H1 (cell line): ENCODE measurements at regions of chr4 and their contacts with region 1.

Region 1: DNA sequence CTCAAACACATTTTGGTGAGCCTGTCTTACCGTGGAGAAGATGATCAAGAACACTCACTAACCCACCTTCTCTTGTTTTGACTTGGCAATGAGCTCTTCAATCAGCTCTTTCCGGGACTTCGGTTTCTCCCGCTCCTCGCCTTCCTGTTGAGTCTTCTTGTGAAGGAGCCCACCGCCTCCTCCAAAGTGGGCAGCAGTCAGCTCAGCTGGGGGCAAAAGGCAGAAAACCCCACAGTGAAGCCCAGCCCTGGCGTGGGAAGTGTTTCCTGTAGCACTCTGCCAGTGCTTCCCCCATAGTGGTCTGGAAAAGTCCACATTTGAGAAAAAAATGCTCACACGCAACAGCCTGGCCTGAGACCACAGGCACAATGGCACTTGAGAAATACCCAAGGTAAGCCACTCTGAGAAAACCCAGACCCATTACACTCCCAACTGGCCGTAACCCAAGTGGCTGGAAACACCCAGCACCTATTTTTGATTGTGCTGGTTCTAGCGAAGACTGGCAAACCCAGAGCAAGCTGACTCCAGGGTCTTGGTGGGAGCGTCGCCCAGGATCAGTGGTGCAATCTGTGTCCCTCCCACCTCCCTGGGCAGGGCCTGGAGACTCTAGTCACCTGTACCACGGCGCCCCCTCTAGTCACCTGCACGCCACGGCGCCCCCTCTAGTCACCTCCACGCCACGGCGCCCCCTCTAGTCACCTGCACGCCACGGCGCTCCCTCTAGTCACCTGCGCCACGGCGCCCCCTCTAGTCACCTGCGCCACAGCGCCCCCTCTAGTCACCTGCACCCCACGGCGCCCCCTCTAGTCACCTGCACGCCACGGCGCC is 8.6 kb downstream of the NOP14 start:
- DNase-seq: peak in 1 of 2 experiments; percentile 78
- H3K4me3 ChIP-seq: no peak overlapping the region
- H3K27ac ChIP-seq: no peak overlapping the region
- H3K4me1 ChIP-seq: no peaks in the 10 kb centered on the region
- H3K27me3 ChIP-seq: no peaks in the 10 kb centered on the region
- CTCF ChIP-seq: peak in 2 of 3 experiments; percentile 78 to 96; a peak in 3 of 4 replicates
- EP300 ChIP-seq: no peak
- POLR2A ChIP-seq: no peak
- RAD21 ChIP-seq: peak; percentile 44 to 46; a peak in 3 of 4 replicates

Region 2: GRCh38 chr4:2910409-2910808 is 44.2 kb before region 1 on chr4:
- CTCF ChIA-PET with region 1: interaction called, 23 read pairs
- POLR2A ChIA-PET with region 1: no interaction called
- DNase-seq: no peak
- H3K4me3 ChIP-seq: no peak overlapping the region
- H3K27ac ChIP-seq: no peak overlapping the region
- H3K4me1 ChIP-seq: no peaks in the 10 kb centered on the region
- H3K27me3 ChIP-seq: no peaks in the 10 kb centered on the region
- CTCF ChIP-seq: peak; percentile 50 to 62 (median 57)
- EP300 ChIP-seq: no peak
- POLR2A ChIP-seq: no peak
- RAD21 ChIP-seq: peak; percentile 27 to 59; a peak in 3 of 4 replicates

Region 3: DNA sequence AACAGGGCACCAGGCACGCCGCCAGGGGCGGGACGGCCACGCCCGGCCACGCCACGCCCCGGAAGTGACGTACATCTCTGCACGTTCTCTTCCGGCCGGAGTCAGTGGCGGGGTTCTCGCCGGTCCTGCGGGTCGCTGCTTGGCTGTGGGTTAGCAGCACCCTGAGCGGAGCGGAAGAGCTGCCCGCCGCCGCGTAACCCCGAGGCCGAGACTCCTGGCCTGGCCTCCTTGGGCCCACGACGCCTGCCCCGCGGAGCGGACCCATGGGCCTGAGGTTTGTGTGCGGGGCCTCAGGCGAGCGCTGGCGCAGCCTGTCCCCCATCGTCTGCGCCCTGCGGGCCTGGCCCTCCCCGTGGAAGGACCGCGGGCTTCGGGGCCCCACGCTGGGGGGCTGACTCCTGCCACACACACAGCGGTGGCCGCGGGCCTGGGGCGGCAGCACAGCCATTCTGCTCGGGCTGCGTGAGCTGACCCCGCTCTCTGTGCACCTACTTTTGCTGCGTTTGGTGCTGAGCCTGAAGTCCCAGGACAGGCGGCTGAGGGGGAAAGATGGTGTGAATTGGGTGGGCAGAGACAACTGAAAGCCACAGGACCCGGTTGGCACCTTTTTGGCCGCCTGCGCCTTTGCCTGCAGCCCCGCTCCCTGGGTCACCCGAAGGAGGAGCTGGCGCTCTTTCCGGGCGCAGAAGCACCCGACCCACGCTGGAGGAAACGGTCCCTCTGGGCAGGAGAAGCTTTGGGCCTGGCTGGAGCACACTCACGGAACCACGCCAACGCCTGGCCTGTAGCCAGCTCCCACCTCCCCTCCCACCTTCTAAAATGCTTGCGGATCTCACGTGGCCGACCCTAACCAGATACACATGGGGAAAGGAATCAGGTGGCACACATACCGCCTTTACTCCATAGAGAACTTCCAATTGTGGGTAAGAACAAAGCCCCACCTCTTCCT is 19.5 kb before region 1 on chr4:
- CTCF ChIA-PET with region 1: interaction called, 11 read pairs
- POLR2A ChIA-PET with region 1: interaction called, 23 read pairs
- DNase-seq: peak; percentile 49 to 97
- H3K4me3 ChIP-seq: peak overlapping the region; percentile 79 to 83 (median 82)
- H3K27ac ChIP-seq: peak overlapping the region; percentile 73; the same call in 1 of the 2 replicates
- H3K4me1 ChIP-seq: peaks cover 0 to 14% (median 7%) of the 10 kb centered on the region in 4 experiments; a peak in 6 of 7 replicates
- H3K27me3 ChIP-seq: no peaks in the 10 kb centered on the region
- CTCF ChIP-seq: no peak
- EP300 ChIP-seq: no peak
- POLR2A ChIP-seq: peak in 1 of 2 experiments; percentile 91; a peak in 2 of 3 replicates
- RAD21 ChIP-seq: no peak

Region 4: DNA sequence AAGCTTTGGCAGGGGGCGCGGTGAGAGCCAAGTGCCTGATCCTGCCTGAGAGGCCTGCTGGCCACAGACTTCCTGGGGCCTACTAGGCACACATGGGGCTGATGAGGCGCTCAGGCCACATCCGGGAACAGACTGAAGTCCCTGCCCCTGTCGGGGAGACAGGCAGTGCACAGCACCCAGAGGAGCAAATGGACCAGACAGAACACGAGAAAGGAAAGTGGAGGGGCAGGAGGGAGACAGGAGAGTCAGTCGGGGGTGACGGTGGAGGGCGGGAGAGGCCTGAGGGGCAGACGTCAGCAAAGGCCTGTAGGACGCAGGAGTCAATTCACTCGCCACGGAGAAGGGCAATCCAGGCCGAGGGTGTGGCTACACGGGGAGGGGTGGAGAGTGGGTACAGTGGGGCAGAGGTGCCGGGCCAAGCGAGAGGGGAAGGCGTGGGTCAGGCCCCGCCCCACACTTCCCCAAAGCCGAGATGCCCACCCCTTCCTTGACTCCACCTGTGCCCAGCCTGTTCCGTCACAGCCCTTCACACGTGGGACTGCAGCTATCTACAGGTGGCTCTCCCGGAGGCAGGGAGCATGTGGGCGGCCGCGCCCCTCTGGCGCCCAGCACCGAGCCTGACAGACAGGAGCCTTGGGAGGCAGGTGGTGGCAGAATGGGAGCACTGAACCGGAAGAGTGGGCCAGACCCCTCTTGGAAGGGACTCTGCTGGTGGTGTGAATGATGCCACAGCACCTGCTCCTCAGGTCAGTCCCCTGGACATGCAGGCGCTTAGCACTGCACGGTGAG is 11.8 kb before region 1 on chr4:
- CTCF ChIA-PET with region 1: interaction called, 18 read pairs
- POLR2A ChIA-PET with region 1: interaction called, 11 read pairs
- DNase-seq: no peak
- H3K4me3 ChIP-seq: no peak overlapping the region
- H3K27ac ChIP-seq: no peak overlapping the region
- H3K4me1 ChIP-seq: no peaks in the 10 kb centered on the region
- H3K27me3 ChIP-seq: no peaks in the 10 kb centered on the region
- CTCF ChIP-seq: no peak
- EP300 ChIP-seq: no peak
- POLR2A ChIP-seq: no peak; a peak in 2 of 3 replicates
- RAD21 ChIP-seq: no peak